ENCODE measurements at regions of chr17 and their contacts with region 1.

Region 1: DNA sequence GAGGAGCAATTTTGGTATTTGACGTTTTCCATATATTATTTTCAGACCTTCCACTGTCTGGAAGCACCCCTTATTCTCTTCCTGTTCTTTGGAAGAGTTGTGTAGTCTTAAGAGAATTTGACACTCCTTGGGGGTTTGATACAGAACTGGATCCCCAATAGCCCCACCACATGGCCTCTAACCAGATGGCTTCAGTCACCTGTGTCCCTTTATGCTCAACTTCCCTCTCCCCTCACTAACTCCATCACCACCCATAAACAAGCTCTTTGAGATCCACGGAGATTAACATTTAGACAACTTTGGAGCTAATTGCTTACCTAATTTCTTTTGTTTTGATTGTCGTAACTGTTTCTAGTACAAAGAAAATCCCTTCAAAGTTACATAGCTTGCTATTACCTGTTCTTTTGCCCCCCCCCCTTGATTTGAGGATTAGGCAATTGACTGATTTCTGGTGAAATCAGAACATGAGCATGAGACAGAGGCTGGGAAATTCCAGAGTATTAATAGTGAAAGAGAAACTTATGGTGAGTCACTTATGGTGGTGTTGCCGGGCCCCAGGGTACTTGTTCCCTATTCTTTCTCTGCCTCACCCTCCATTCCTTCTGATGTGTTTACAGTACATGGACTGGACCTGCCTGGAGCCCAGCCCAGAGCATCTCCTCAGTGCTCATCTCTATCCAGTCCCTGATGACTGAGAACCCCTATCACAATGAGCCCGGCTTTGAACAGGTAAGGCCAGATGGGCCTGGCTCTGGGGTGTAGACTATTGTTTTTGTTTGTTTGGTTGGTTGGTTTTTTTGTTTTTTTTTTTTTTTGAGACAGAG is 7.5 kb downstream of the UBE2Z start:
- DNase-seq: peak in 13 of 35 experiments; percentile 1 to 63 (median 7)
- ATAC-seq: peak; percentile 36 to 85 (median 54)
- H3K4me3 ChIP-seq: no peak overlapping the region
- H3K4me3 Mint-ChIP-seq: peak overlapping the region; percentile 0 to 31 (median 20)
- H3K27ac ChIP-seq: peak overlapping the region; percentile 40
- H3K27ac Mint-ChIP-seq: peak overlapping the region; percentile 47 to 68
- H3K4me1 ChIP-seq: peaks cover 0 to 24% of the 10 kb centered on the region in 2 experiments
- H3K4me1 Mint-ChIP-seq: peaks cover 44 to 54% (median 53%) of the 10 kb centered on the region in 3 donors
- H3K27me3 ChIP-seq: no peaks in the 10 kb centered on the region
- H3K27me3 Mint-ChIP-seq: no peaks in the 10 kb centered on the region

Region 2: DNA sequence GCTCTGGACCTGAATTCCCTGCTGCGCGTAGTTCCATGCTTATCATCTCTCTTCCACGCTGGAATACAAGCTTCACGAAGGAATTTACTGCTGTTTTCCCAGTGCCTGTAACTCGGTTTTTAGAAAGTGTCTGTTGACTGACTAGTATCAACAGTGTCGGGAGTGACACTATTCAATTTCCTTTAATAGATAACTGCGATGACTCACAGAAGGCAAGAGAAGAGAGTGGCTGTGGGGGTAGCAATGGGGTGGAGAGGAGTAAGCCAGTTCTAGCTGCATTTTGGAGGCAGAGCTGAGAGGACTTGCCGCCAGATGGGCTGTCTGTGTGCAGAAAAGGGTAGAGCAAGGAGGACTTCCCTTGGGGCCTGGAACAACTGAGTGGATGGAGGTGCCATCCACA is 242.1 kb after region 1 on chr17:
- CTCF ChIA-PET with region 1: no interaction called
- POLR2A ChIA-PET with region 1: no interaction called
- DNase-seq: no peak
- ATAC-seq: no peak
- H3K4me3 ChIP-seq: no peak overlapping the region
- H3K4me3 Mint-ChIP-seq: no peak overlapping the region
- H3K27ac ChIP-seq: no peak overlapping the region
- H3K27ac Mint-ChIP-seq: no peak overlapping the region
- H3K4me1 ChIP-seq: no peaks in the 10 kb centered on the region
- H3K4me1 Mint-ChIP-seq: no peaks in the 10 kb centered on the region
- H3K27me3 ChIP-seq: peaks cover 4 to 35% of the 10 kb centered on the region in 2 experiments
- H3K27me3 Mint-ChIP-seq: peaks cover 34 to 48% of the 10 kb centered on the region in 2 donors

Region 3: DNA sequence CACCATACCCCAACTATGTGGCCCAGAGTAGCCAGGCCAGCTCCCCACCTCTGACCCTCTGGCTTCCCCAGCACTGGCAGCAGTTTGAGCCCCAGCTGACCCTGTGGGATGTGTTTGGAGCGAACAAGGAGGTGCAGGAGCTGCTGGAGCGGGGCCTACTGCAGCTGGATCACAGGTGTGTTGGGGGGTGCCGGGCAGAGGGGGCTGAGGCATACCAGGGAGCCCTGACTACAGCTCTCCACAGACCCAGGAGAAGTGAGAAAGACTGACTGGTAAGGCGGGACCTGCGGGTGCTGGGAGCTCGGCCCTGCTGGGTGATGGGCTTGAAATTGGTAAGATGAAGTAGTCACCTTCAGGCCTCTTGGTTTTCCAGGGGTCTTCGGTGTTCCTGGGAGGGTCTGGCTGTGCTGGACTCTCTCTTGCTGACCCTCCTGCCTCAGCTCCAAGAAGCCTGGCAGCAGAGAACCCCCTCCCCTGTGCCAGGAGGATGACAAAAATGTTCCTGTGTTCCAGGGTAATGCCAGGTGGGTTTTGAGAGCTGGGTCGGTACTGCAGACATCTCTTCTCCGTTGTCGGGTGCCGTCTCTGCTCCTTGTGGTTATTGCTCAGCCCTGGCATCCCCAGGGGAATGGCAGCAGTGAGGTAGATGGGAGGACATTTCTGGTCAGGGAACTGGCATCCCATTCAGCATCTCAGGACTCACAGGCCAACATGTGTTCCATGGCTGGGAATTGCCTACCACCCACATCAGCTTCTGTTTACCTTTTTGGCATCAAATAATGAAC is 1568.9 kb after region 1 on chr17:
- CTCF ChIA-PET with region 1: no interaction called
- POLR2A ChIA-PET with region 1: interaction called in 1 of 2 experiments, 22 read pairs
- DNase-seq: no peak
- ATAC-seq: no peak
- H3K4me3 ChIP-seq: no peak overlapping the region
- H3K4me3 Mint-ChIP-seq: no peak overlapping the region
- H3K27ac ChIP-seq: no peak overlapping the region
- H3K27ac Mint-ChIP-seq: no peak overlapping the region
- H3K4me1 ChIP-seq: peaks cover 2 to 5% of the 10 kb centered on the region in 2 experiments
- H3K4me1 Mint-ChIP-seq: peaks cover 16 to 18% (median 17%) of the 10 kb centered on the region in 3 donors
- H3K27me3 ChIP-seq: no peaks in the 10 kb centered on the region
- H3K27me3 Mint-ChIP-seq: no peaks in the 10 kb centered on the region